GM10248 (cell line): ENCODE measurements at regions of chr16 and their contacts with region 1.

Region 1: DNA sequence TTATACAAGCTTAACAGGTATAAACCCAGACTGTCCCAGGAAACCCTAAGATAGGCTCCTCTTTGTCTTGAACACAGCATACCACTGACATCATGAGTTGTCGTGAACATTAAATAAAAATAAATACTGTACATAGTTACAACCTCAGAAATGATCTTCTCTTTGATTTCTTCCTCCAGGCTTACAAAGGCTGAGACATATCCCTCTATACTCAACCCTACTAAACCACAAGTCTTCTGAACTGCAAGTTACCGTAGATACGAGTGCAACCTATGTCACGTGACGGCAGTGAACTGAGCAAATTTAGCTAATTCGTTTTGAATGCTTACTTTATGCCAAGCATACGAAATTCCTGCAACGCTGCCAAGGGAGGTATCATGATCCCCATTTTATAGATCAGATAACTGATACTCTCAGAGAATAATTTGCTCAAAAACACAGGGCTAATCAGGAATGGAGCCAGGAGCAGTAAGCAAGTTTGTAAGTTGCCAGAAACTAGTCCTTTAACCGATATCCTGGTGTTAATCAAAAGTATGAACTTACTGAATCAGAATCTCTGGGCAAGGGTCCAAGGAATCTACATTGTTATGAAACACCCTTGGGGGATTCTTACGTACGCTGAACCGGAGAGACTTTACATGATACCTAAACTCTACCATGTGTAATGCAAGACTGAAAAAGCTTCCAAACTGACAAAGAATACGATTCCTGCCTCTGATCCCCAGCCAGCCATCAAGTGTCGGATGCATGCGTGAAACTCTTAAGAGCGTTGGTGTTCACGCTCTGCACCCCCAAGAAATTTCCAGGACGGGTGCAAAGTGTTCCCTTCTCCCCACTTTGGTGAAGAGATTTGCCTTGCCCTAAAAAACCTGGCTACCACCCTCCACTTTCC is 106.2 kb downstream of the XYLT1 start:
- DNase-seq: no peak
- CTCF ChIP-seq: no peak

Region 2: GRCh38 chr16:17271687-17272086 is 92.9 kb before region 1 on chr16:
- CTCF ChIA-PET with region 1: no interaction called
- POLR2A ChIA-PET with region 1: no interaction called
- DNase-seq: no peak
- CTCF ChIP-seq: no peak

Region 3: DNA sequence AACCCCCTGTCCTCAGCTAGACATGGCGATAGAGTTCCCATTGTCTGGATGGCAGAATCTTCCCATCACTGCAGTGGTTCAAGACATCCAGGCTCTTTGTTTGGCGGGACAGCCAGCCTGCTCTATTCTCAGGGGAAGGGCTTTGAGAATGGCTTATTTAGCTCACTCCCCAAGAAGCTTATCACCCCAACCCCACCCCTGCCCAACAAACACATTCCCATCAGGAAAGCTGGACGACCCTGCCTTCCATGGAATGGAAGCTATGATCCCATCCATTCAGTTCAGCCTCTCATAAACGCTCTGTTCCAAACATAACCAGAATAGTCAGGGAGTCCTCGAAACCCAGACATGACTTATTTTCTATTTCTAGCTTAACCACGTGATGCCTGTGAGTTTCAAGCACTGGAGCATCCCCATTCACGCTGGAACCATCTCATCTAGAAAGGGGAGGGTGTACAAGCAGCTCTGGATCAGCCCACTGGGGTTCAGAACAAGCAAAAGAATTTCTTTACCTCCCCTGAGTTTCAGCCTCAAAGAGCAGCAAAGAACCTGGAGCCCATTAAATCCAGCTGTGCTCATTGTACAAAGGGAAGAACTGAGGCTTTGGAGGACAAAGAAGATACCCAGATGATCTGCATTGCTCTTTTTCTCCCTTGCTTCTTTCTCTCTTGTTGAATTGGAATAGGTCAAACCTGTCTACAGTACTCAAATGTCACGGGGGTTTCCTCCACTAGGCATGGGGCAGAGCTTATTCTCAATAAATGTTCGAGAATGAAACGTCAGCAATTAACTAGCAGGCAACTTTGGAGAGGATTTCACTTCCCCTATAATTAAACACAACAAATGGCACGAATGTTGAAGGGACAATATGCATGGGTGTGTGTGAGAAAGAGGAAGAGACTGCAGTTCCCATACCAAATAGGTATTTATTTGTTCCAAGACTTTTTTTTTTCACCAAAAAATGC is 13.1 kb after region 1 on chr16:
- CTCF ChIA-PET with region 1: interaction called, 19 read pairs
- POLR2A ChIA-PET with region 1: interaction called, 3 read pairs
- DNase-seq: peak; percentile 66
- CTCF ChIP-seq: no peak